CD4-positive, alpha-beta T cell (primary cell): ENCODE measurements at regions of chr3 and their contacts with region 1.

Region 1: GRCh38 chr3:9390265-9390888 is 7.0 kb upstream of the SETD5 start:
- DNase-seq: no peak
- ATAC-seq: no peak
- H3K4me3 ChIP-seq: no peak overlapping the region
- H3K4me3 Mint-ChIP-seq: no peak overlapping the region
- H3K27ac ChIP-seq: no peak overlapping the region
- H3K27ac Mint-ChIP-seq: peak overlapping the region; percentile 99
- H3K4me1 ChIP-seq: peaks cover 21% of the 10 kb centered on the region
- H3K4me1 Mint-ChIP-seq: peaks cover 68% of the 10 kb centered on the region
- H3K27me3 ChIP-seq: no peaks in the 10 kb centered on the region
- H3K27me3 Mint-ChIP-seq: no peaks in the 10 kb centered on the region
- CTCF ChIP-seq: no peak

Region 2: DNA sequence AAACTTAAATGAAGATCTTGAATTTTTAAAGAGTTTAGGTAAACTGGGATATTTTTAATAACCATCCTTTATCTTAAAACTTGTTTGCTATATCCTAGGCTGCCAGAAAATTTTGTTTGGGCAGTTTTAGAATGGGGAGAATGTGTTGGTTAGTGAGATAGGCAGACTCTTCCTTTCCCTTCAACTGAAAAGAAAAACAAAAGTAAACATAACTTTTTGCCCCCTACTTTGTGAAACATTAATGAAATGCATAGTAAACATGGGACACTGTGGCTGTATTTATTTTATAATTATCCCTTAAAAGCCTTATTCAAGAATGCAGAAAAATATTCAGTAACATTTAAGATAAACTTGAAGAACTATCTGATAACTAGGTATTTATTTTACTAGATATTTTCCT is 38.0 kb after region 1 on chr3:
- CTCF ChIA-PET with region 1: interaction called, 3 read pairs
- POLR2A ChIA-PET with region 1: interaction called, 4 read pairs
- intact Hi-C with region 1: loop called in 1 of 2 experiments (anchors 5 kb)
- DNase-seq: no peak
- ATAC-seq: no peak
- H3K4me3 ChIP-seq: no peak overlapping the region
- H3K4me3 Mint-ChIP-seq: no peak overlapping the region
- H3K27ac ChIP-seq: no peak overlapping the region
- H3K27ac Mint-ChIP-seq: no peak overlapping the region
- H3K4me1 ChIP-seq: no peaks in the 10 kb centered on the region
- H3K4me1 Mint-ChIP-seq: peaks cover 11% of the 10 kb centered on the region
- H3K27me3 ChIP-seq: no peaks in the 10 kb centered on the region
- H3K27me3 Mint-ChIP-seq: no peaks in the 10 kb centered on the region
- CTCF ChIP-seq: no peak